Sigmoid colon (tissue), 7 donors: ENCODE measurements at regions of chr19 and their contacts with region 1.

Region 1: DNA sequence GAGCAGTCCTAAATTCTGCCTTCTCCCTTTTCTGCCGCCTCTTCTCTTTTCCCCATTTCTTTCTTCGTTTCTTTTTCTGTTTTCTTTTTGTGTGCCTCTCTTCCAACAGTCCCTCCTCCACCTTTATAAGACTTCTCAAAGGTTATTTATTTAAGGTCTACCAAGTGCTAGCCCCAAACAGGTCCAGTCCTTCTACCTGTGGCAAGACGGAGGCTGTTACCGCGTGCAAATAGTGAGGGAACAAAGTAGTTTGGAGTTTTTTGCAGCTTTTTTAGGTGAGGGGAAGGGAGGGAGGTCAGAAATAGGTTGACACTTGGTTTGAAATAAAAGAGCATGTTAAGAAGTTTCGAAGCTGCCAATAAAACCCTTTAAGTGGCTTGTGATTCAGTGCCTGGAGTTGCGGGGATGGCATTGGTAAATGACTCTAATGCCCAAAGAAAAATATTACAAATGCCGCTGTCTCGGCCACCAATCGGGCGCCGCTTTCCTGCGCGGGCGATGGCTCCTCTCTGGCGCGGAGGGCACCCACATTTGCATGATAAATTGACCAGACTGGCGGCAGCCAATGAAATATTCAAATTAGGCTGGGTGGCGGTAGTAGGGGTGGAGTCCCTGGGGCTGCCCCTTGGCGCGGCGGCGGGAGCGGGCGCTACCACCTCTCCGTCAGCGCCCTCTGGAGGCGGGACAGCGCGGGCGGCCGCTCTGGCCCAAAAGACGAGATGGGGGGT is 7.5 kb upstream of the TSHZ3 start:
- DNase-seq: no peak
- H3K4me3 ChIP-seq: no peak overlapping the region
- H3K27ac ChIP-seq: no peak overlapping the region
- H3K4me1 ChIP-seq: peaks cover 0 to 14% (median 11%) of the 10 kb centered on the region in 4 donors
- H3K27me3 ChIP-seq: no peaks in the 10 kb centered on the region
- CTCF ChIP-seq: peak in 2 of 4 experiments; percentile 27 to 52
- EP300 ChIP-seq: no peak
- POLR2A ChIP-seq: no peak

Region 2: DNA sequence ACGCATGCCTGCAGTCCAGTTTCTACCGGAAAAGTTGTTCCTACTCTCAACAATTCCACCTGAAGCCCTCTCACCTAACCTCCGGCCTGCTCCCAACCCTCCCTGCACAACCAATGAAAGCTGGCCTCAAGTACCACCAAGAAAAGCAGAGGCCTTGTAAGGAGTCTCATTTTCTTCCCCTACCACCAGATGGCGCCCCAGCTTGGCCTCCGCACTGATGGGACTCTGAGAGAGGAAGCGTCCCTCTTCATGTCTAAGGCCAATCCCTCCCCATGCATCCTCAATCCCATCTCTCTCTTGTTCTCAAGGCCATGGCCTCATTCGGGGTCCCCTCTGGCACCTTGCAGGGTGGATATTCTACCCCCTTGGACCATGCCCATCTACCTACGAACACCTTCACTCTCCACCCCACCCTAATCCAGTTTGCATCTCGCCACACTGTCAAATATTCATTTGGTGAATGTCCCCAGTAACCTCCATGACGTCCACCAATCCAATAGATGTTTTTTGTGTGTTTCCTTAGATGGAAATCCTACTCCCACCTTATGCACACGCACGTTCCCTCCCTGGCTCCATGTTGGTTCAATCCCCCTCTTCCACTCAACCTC is 571.8 kb before region 1 on chr19:
- intact Hi-C with region 1: loop called (anchors 5 kb)
- DNase-seq: peak; percentile 76
- H3K4me3 ChIP-seq: no peak overlapping the region
- H3K27ac ChIP-seq: no peak overlapping the region
- H3K4me1 ChIP-seq: no peaks in the 10 kb centered on the region
- H3K27me3 ChIP-seq: no peaks in the 10 kb centered on the region
- CTCF ChIP-seq: peak; percentile 37 to 65 (median 58)
- EP300 ChIP-seq: no peak
- POLR2A ChIP-seq: no peak